T-cell (primary cell): ENCODE measurements at regions of chr5 and their contacts with region 1.

Region 1: GRCh38 chr5:134176511-134177368 is at the start of gene SKP1:
- DNase-seq: peak; percentile 73 to 93 (median 84)
- ATAC-seq: peak; percentile 84 to 94 (median 87)
- H3K4me3 ChIP-seq: peak within 1 kb of the TSS; percentile 61 to 96
- H3K4me3 Mint-ChIP-seq: peak within 1 kb of the TSS; percentile 95 to 97 (median 96)
- H3K27ac ChIP-seq: peak within 1 kb of the TSS; percentile 96
- H3K27ac Mint-ChIP-seq: peak within 1 kb of the TSS; percentile 96 to 97
- H3K4me1 ChIP-seq: peaks cover 17 to 26% of the 10 kb centered on the region in 2 experiments
- H3K4me1 Mint-ChIP-seq: peaks cover 36 to 45% (median 36%) of the 10 kb centered on the region in 3 donors
- H3K27me3 ChIP-seq: no peaks in the 10 kb centered on the region
- H3K27me3 Mint-ChIP-seq: no peaks in the 10 kb centered on the region
- total RNA-seq, gene SKP1: 178 to 314 (median 203) TPM

Region 2: DNA sequence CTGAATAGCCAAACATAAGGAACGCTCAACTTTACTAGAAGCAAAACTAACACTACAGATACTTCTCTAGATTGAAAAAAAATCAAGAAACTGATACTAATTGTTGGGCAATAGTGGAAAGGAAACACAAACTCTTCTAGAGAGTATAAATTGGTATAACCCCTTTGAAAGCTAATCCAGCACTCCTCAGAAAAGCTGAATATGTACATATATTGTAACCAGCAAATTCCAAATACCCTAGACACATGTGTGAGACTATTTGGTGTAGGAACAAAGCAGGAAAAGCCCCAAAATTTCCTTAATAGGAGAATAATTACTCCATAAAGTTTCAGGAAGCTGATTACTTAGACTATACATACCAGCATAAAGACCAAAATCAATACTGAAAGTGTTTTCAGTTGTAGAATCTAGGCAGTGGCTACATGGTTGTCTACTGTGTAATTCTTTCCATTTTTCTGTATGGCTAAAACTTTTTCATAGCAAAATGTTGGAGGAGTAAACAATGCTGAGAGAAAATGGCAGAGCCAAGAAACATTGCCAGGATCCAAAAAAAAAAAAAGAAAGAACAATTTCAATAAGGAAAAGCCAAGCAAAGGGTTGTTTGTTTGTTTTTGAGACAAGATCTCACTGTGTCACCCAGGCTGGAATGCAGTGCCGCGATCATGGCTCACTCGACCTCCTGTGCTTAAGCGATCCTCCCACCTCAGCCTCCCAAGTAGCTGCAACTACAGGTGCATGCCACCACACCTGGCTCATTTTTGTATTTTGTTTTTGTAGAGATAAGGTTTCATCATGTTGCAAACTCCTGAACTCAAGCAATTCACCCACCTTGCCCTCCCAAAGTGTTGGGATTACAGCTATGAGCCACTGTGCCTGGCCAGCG is 15.0 kb before region 1 on chr5:
- CTCF ChIA-PET with region 1: interaction called, 3 to 11 read pairs
- POLR2A ChIA-PET with region 1: interaction called, 3 to 14 read pairs
- DNase-seq: no peak
- ATAC-seq: no peak
- H3K4me3 ChIP-seq: no peak overlapping the region
- H3K4me3 Mint-ChIP-seq: no peak overlapping the region
- H3K27ac ChIP-seq: no peak overlapping the region
- H3K27ac Mint-ChIP-seq: peak overlapping the region in 1 of 2 donors; percentile 48
- H3K4me1 ChIP-seq: peaks cover 3 to 4% of the 10 kb centered on the region in 2 experiments
- H3K4me1 Mint-ChIP-seq: peaks cover 48 to 67% (median 50%) of the 10 kb centered on the region in 3 donors
- H3K27me3 ChIP-seq: no peaks in the 10 kb centered on the region
- H3K27me3 Mint-ChIP-seq: no peaks in the 10 kb centered on the region

Region 3: DNA sequence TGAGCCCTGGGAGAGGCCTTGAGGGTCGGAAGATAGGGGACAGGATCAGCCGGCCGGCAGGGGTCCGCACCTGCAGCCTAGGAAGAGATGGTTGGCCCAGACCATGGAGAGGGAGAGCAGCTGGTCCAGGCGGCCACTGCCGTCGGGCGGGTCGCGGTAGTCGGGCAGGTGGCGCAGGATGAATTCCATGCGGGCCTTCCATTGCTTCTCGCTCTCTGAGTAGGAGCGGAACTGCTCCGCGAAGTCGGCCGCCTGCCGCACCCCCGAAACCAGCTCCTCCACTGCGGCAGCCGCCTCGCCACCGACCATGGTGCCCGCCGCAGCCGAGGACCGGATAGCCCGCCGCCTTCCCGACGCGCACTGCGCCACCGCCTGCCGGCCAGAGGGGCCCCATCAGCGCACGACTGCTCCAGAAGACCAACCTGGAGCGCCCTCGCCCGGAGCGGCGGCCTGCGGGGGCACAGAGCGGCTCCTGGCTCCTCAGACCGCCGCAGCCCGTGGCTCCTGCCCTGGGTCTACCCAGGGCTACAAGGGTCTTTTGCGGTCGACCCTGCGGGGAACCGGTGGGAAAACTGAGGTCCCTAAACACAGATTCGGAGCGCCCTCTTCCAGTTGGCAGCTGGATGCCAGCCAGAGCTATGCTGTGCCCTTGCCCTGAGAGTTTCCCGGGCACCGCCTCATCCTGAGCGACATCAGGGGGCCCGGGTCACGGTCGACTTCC is 235.0 kb after region 1 on chr5 and contains the start of gene CDKN2AIPNL:
- CTCF ChIA-PET with region 1: no interaction called
- POLR2A ChIA-PET with region 1: no interaction called
- DNase-seq: peak; percentile 75 to 93 (median 86)
- ATAC-seq: peak; percentile 99 to 100 (median 100)
- H3K4me3 ChIP-seq: peak within 1 kb of the TSS; percentile 83 to 85
- H3K4me3 Mint-ChIP-seq: peak within 1 kb of the TSS; percentile 91 to 93 (median 91)
- H3K27ac ChIP-seq: peak within 1 kb of the TSS; percentile 68
- H3K27ac Mint-ChIP-seq: peak within 1 kb of the TSS; percentile 87 to 92
- H3K4me1 ChIP-seq: peaks cover 11 to 29% of the 10 kb centered on the region in 2 experiments
- H3K4me1 Mint-ChIP-seq: peaks cover 28 to 42% (median 41%) of the 10 kb centered on the region in 3 donors
- H3K27me3 ChIP-seq: no peaks in the 10 kb centered on the region
- H3K27me3 Mint-ChIP-seq: no peaks in the 10 kb centered on the region
- total RNA-seq, gene CDKN2AIPNL: 14.0 to 17.3 (median 15.3) TPM